Activated CD8-positive, alpha-beta T cell treated with anti-CD3 and anti-CD28 coated beads, Interleukin-2, amount 10 ng/mL, durations not matched to agents 7 days and 5 days (primary cell): ENCODE measurements at regions of chr1 and their contacts with region 1.

Region 1: GRCh38 chr1:12434174-12434573 is 183.8 kb downstream of the DHRS3 start:
- DNase-seq: peak; percentile 88
- ATAC-seq: peak; percentile 63
- H3K4me3 Mint-ChIP-seq: peak overlapping the region; percentile 56
- H3K27ac Mint-ChIP-seq: peak overlapping the region; percentile 89
- H3K4me1 Mint-ChIP-seq: peaks cover 90% of the 10 kb centered on the region
- H3K27me3 Mint-ChIP-seq: no peaks in the 10 kb centered on the region

Region 2: GRCh38 chr1:12448746-12449177 is 14.6 kb after region 1 on chr1:
- CTCF ChIA-PET with region 1: interaction called, 108 read pairs
- POLR2A ChIA-PET with region 1: interaction called, 40 read pairs
- DNase-seq: no peak
- ATAC-seq: no peak
- H3K4me3 Mint-ChIP-seq: peak overlapping the region; percentile 73
- H3K27ac Mint-ChIP-seq: peak overlapping the region; percentile 98
- H3K4me1 Mint-ChIP-seq: peaks cover 90% of the 10 kb centered on the region
- H3K27me3 Mint-ChIP-seq: no peaks in the 10 kb centered on the region

Region 3: GRCh38 chr1:12454406-12455391 is 20.5 kb after region 1 on chr1:
- CTCF ChIA-PET with region 1: interaction called, 108 read pairs
- POLR2A ChIA-PET with region 1: interaction called, 40 read pairs
- DNase-seq: no peak
- ATAC-seq: no peak
- H3K4me3 Mint-ChIP-seq: no peak overlapping the region
- H3K27ac Mint-ChIP-seq: peak overlapping the region; percentile 86
- H3K4me1 Mint-ChIP-seq: peaks cover 88% of the 10 kb centered on the region
- H3K27me3 Mint-ChIP-seq: no peaks in the 10 kb centered on the region

Region 4: DNA sequence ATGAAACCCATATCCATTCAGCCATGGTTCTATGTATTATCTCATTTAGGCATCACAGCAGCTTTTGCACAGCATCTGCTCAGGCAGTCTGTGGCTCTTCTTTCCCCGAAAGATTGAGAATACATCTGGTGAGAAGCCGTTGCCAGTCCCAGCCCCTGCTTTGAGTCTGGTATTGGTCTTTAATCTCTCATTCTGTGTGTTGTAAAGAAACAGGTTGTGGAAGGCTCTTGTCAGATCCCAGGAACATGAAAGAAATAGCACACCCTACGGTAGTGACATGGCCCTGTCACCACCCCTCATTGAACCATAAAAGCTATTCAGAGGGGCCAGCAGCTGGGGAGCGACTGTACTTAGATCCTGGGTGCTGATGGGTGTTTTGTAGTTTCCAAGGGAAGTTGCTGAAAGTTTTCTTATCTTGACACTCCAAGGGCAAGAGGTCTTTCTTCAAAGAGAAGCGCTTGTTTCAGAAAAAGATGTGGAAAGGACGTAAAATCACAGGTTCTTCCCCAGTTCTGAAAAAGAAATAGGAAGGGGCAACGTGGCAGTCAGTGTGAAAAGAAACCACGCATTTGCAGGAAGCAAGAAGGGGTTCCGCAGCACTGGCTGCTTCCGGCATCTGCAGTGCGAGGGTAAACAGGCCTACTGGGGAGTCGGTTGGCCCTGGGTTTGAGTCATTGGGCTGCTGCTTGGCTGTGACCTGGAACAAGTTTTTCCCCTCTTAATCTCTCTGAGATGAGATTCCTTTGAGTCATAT is 38.8 kb after region 1 on chr1:
- CTCF ChIA-PET with region 1: interaction called, 10 read pairs
- POLR2A ChIA-PET with region 1: interaction called, 21 read pairs
- DNase-seq: peak; percentile 81
- ATAC-seq: peak; percentile 79
- H3K4me3 Mint-ChIP-seq: peak overlapping the region; percentile 68
- H3K27ac Mint-ChIP-seq: peak overlapping the region; percentile 90
- H3K4me1 Mint-ChIP-seq: peaks cover 88% of the 10 kb centered on the region
- H3K27me3 Mint-ChIP-seq: no peaks in the 10 kb centered on the region

Region 5: DNA sequence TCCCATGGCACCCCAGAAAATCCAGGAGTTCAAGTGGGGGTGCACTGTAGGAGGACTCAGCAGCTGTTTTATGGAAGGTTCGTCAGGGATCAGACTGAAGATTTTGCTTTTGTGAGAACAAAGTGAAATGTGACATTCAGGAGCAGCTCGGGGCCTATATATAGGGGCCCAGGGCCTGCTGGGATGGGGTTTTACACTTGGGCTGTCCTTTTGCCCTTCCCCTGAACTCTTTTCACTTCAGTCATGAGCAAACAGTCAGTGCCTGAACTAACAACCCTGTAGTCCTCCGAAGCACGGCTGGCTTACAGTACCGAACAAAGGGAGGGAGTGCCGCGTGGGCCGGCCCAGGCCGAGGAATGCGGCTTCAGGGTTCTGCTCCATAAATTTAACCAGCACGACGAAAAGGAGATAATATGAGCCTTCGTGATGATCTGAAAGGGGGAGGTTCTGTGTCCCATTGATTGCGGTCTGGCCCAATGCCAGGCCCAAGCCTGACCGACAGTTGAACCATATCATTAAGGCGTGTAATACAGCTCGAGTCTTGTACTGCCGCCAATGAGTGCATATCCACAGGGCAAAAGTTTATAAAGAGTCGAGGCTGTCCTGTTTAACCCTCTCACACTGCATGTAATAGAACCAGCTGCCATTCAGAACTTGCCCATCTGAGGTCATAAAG is 43.9 kb after region 1 on chr1:
- CTCF ChIA-PET with region 1: interaction called, 10 read pairs
- POLR2A ChIA-PET with region 1: interaction called, 21 read pairs
- DNase-seq: peak; percentile 47
- ATAC-seq: peak; percentile 33
- H3K4me3 Mint-ChIP-seq: peak overlapping the region; percentile 61
- H3K27ac Mint-ChIP-seq: peak overlapping the region; percentile 87
- H3K4me1 Mint-ChIP-seq: peaks cover 92% of the 10 kb centered on the region
- H3K27me3 Mint-ChIP-seq: no peaks in the 10 kb centered on the region